CD14-positive monocyte (primary cell): ENCODE measurements at regions of chr5 and their contacts with region 1.

Region 1: GRCh38 chr5:139204196-139204595 is 6.0 kb upstream of the SIL1 start:
- DNase-seq: no peak
- H3K4me3 ChIP-seq: no peak overlapping the region
- H3K4me3 Mint-ChIP-seq: no peak overlapping the region
- H3K27ac ChIP-seq: no peak overlapping the region
- H3K27ac Mint-ChIP-seq: peak overlapping the region in 2 of 7 donors; percentile 5 to 31
- H3K4me1 ChIP-seq: peaks cover 26 to 34% of the 10 kb centered on the region in 2 donors
- H3K4me1 Mint-ChIP-seq: peaks cover 35% of the 10 kb centered on the region
- H3K27me3 ChIP-seq: no peaks in the 10 kb centered on the region
- H3K27me3 Mint-ChIP-seq: peaks cover 0 to 4% (median 1%) of the 10 kb centered on the region in 3 donors
- CTCF ChIP-seq: no peak

Region 2: DNA sequence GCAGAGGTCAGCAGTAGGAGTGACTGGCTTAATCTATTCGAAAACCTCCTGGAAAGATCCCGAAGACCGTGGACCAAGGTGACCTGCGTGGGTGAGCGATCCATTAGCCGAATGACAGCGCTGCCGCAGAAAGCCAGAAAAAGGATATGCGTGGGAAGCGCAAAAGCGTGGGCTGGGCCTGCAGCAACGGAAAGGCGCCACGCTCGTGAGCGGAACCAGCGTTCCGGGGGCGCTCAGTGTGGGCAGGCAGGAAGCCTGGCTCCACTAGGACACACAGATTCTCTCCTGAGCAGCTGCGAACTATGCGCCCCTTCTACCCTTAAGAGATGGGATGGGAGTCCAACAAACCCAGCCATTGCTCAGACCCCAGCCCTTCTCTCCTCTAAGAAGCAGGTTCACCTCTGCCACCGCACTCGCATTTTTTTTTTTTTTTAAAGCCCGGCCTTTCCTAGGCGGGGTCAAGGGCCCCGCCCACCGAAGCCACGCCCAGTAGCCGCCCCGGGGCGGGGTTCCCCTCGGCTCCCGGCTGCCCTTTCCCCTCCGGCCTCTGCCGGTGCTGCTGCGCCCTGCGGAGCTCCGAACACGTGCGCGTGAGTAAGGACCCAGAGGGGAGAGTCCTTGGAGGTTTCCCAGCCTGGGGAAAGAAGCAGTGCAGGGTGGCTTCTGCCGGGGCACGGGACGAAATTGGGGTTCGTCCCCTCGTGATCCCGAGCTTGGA is 69.5 kb after region 1 on chr5:
- intact Hi-C with region 1: loop called in 1 of 2 experiments (anchors 5 kb)
- DNase-seq: peak; percentile 89 to 97 (median 93)
- H3K4me3 ChIP-seq: peak overlapping the region; percentile 55 to 83 (median 67)
- H3K4me3 Mint-ChIP-seq: peak overlapping the region; percentile 84 to 93
- H3K27ac ChIP-seq: peak overlapping the region; percentile 67 to 80
- H3K27ac Mint-ChIP-seq: peak overlapping the region; percentile 85 to 95 (median 89)
- H3K4me1 ChIP-seq: peaks cover 35 to 38% of the 10 kb centered on the region in 2 donors
- H3K4me1 Mint-ChIP-seq: peaks cover 41% of the 10 kb centered on the region
- H3K27me3 ChIP-seq: no peaks in the 10 kb centered on the region
- H3K27me3 Mint-ChIP-seq: peaks cover 0 to 2% (median 0%) of the 10 kb centered on the region in 3 donors
- CTCF ChIP-seq: peak; percentile 19